SK-N-SH (cell line): ENCODE measurements at regions of chr19 and their contacts with region 1.

Region 1: DNA sequence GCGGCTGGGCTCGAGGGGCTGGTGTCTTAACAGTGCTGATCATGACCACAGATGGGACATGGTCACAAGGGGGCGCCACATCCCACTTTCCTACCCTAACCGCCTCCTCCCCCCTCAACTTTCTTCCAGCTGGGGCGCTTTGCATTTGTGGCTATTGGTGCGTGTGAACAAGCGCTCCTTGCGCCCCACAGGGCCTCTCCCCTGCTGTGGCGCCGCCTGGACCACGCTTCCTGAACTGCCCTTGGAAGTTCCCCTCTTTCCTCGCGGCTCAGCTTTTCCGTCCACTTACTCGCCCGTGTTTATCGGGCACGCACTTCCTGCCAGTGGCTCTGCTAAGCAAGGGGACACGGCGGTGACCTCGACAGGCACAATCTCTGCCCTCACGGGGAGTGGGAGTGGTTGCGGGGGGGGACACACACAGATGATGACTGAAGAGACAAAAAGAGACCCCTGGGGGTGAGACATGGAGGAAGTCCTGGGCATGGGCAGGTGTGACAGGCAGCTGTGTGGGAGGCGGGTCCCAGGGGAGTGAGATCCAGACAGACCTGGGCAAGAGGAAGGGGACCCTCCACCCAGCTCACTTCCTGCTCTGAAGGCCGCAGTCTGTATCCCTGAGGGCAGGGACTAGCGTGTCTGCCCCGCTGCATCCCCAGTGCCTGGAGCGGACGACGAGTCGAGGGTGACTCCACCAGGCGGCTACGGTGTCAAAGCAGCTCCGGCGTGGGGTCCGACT is 40.3 kb downstream of the ZNF787 start:
- DNase-seq: peak; percentile 84
- H3K4me3 ChIP-seq: peak overlapping the region; percentile 35 to 54
- H3K27ac ChIP-seq: no peak overlapping the region
- H3K4me1 ChIP-seq: peaks cover 0 to 6% of the 10 kb centered on the region in 2 experiments; a peak in 1 of 4 replicates
- H3K27me3 ChIP-seq: no peaks in the 10 kb centered on the region
- CTCF ChIP-seq: peak; percentile 51
- EP300 ChIP-seq: no peak
- RAD21 ChIP-seq: peak; percentile 58

Region 2: GRCh38 chr19:56066152-56067023 is 14.4 kb before region 1 on chr19:
- CTCF ChIA-PET with region 1: interaction called, 91 read pairs
- POLR2A ChIA-PET with region 1: no interaction called
- DNase-seq: peak; percentile 89
- H3K4me3 ChIP-seq: peak overlapping the region; percentile 26 to 54
- H3K27ac ChIP-seq: no peak overlapping the region
- H3K4me1 ChIP-seq: peaks cover 0 to 7% of the 10 kb centered on the region in 2 experiments; a peak in 1 of 4 replicates
- H3K27me3 ChIP-seq: peaks cover 10% of the 10 kb centered on the region; the same call in 1 of the 2 replicates
- CTCF ChIP-seq: peak; percentile 87
- EP300 ChIP-seq: no peak
- RAD21 ChIP-seq: peak; percentile 75

Region 3: GRCh38 chr19:56110515-56111448 is 29.9 kb after region 1 on chr19:
- CTCF ChIA-PET with region 1: interaction called, 11 read pairs
- POLR2A ChIA-PET with region 1: no interaction called
- DNase-seq: peak; percentile 73
- H3K4me3 ChIP-seq: no peak overlapping the region
- H3K27ac ChIP-seq: peak overlapping the region in 1 of 2 experiments; percentile 25; a peak in 1 of 4 replicates
- H3K4me1 ChIP-seq: peaks cover 5 to 33% of the 10 kb centered on the region in 2 experiments; a peak in 2 of 4 replicates
- H3K27me3 ChIP-seq: no peaks in the 10 kb centered on the region
- CTCF ChIP-seq: no peak
- EP300 ChIP-seq: no peak
- RAD21 ChIP-seq: no peak

Region 4: GRCh38 chr19:56162258-56162657 is 81.4 kb after region 1 on chr19:
- CTCF ChIA-PET with region 1: interaction called, 21 read pairs
- POLR2A ChIA-PET with region 1: no interaction called
- DNase-seq: no peak
- H3K4me3 ChIP-seq: no peak overlapping the region
- H3K27ac ChIP-seq: no peak overlapping the region
- H3K4me1 ChIP-seq: no peaks in the 10 kb centered on the region
- H3K27me3 ChIP-seq: peaks cover under 1% of the 10 kb centered on the region; the same call in 1 of the 2 replicates
- CTCF ChIP-seq: no peak
- EP300 ChIP-seq: no peak
- RAD21 ChIP-seq: no peak

Region 5: DNA sequence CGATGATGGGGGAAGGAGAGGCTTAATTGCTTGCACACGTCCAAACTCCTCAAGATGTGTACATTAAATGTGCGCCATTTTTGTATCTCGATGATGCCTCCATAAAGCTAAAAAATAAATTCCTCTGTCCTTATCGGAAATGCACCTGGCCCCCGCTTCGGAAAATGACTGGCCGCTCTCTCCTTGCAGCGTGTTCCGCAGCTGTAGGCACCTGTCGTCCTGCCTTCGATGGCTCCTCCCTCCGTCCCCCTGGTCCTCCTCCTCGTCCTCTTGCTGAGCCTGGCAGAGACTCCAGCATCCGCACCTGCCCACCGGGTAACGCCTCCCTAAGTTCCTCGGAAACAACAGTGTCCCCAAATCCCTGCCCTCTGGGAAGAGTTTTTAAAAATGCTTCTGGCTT is 96.0 kb after region 1 on chr19:
- CTCF ChIA-PET with region 1: interaction called, 56 read pairs
- POLR2A ChIA-PET with region 1: no interaction called
- DNase-seq: no peak
- H3K4me3 ChIP-seq: no peak overlapping the region
- H3K27ac ChIP-seq: no peak overlapping the region
- H3K4me1 ChIP-seq: no peaks in the 10 kb centered on the region
- H3K27me3 ChIP-seq: peaks cover 77% of the 10 kb centered on the region
- CTCF ChIP-seq: no peak
- EP300 ChIP-seq: no peak
- RAD21 ChIP-seq: no peak

Region 6: GRCh38 chr19:56252699-56253422 is 172.0 kb after region 1 on chr19:
- CTCF ChIA-PET with region 1: interaction called, 25 read pairs
- POLR2A ChIA-PET with region 1: interaction called, 4 read pairs
- DNase-seq: peak; percentile 74
- H3K4me3 ChIP-seq: peak overlapping the region in 1 of 2 experiments; percentile 28; a peak in 1 of 4 replicates
- H3K27ac ChIP-seq: no peak overlapping the region
- H3K4me1 ChIP-seq: peaks cover 0 to 4% of the 10 kb centered on the region in 2 experiments; a peak in 1 of 4 replicates
- H3K27me3 ChIP-seq: no peaks in the 10 kb centered on the region
- CTCF ChIP-seq: peak; percentile 83
- EP300 ChIP-seq: no peak
- RAD21 ChIP-seq: peak; percentile 56

Region 7: DNA sequence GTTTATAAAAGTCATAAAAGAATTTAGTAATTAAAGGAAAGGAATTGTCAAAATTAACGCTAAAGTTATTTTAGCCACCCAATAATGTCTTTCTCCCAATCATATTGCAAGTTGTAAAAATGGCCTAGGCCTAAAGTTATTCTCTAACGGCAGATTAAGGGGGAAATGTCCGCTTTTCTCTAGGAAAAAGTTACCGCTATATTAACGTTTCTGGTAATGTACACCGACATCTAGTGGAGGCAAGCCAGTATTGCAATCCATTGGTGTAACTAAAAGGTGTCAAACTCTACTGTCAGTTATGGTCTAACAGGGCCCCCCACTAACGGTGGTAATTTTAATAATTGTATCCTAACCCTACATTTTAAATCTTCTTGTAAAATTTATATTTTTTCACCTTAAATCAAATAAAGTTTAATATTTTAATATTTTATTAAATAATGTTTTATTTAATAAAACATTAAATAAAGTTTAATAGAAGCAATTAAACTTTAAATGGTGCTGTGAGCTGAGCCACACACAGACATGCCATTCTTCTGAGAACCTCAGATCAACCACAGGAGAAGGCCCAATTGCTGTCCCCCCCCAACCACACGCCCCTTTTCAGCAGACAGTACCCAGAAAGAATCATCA is 269.7 kb after region 1 on chr19:
- CTCF ChIA-PET with region 1: interaction called, 12 read pairs
- POLR2A ChIA-PET with region 1: no interaction called
- DNase-seq: peak; percentile 55
- H3K4me3 ChIP-seq: no peak overlapping the region
- H3K27ac ChIP-seq: no peak overlapping the region
- H3K4me1 ChIP-seq: no peaks in the 10 kb centered on the region
- H3K27me3 ChIP-seq: no peaks in the 10 kb centered on the region
- CTCF ChIP-seq: peak; percentile 81
- EP300 ChIP-seq: no peak
- RAD21 ChIP-seq: peak; percentile 73